CD4-positive, alpha-beta memory T cell (primary cell): ENCODE measurements at regions of chrX and their contacts with region 1.

Region 1: GRCh38 chrX:39874202-39874816 is 223.4 kb downstream of the BCOR start:
- DNase-seq: peak in 1 of 5 donors; percentile 47
- H3K4me3 ChIP-seq: no peak overlapping the region
- H3K4me3 Mint-ChIP-seq: no peak overlapping the region
- H3K27ac ChIP-seq: no peak overlapping the region
- H3K27ac Mint-ChIP-seq: peak overlapping the region in 4 of 7 donors; percentile 0 to 52 (median 42)
- H3K4me1 ChIP-seq: peaks cover 22% of the 10 kb centered on the region
- H3K4me1 Mint-ChIP-seq: peaks cover 15 to 38% (median 24%) of the 10 kb centered on the region in 4 donors
- H3K27me3 ChIP-seq: no peaks in the 10 kb centered on the region
- H3K27me3 Mint-ChIP-seq: no peaks in the 10 kb centered on the region

Region 2: DNA sequence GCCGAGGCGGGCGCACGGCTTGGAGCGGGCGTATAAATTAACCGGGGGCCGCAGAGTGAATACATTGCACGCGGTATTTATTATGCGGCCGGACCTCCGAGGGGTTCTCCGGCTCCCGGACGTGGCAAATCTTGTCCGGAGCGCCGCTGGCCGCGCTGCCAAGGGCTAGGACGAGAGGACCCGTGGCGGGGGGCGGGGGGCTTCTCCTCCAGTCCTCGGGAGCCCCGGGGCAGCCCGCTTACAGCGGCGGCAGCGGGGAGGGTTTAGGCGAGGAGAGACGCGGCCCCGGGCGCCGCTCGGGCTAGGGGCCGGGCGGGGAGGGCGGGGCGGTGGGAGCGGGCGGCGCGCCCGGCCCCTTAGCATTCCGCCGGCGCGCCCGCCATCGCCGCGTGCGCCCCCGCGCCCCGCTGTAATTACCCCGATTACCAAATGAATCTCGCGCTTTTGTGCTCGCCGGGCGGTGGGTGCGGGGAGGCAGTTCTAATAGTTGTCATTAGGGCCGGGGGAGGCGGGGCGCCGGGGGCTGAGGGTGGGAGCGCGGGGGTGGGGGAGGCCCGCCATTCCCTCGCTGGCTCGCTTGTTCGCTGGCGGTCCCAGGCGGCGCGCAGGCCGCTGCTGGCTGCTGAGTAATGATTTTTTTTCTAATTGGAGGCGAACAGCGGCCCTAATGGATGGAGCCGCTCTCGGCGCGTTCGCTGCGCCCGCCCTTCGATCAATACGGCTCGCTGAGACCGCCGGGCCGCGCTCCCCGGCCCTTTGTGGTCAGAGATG is 53.2 kb before region 1 on chrX:
- CTCF ChIA-PET with region 1: no interaction called
- POLR2A ChIA-PET with region 1: no interaction called
- intact Hi-C with region 1: loop called (anchors 5 kb)
- DNase-seq: no peak
- H3K4me3 ChIP-seq: no peak overlapping the region
- H3K4me3 Mint-ChIP-seq: peak overlapping the region; percentile 49 to 74 (median 64)
- H3K27ac ChIP-seq: no peak overlapping the region
- H3K27ac Mint-ChIP-seq: no peak overlapping the region
- H3K4me1 ChIP-seq: peaks cover 8% of the 10 kb centered on the region
- H3K4me1 Mint-ChIP-seq: peaks cover 5 to 13% (median 7%) of the 10 kb centered on the region in 4 donors
- H3K27me3 ChIP-seq: no peaks in the 10 kb centered on the region
- H3K27me3 Mint-ChIP-seq: no peaks in the 10 kb centered on the region

Region 3: GRCh38 chrX:39907964-39908616 is 33.8 kb after region 1 on chrX:
- CTCF ChIA-PET with region 1: no interaction called
- POLR2A ChIA-PET with region 1: no interaction called
- intact Hi-C with region 1: no loop called
- DNase-seq: no peak
- H3K4me3 ChIP-seq: no peak overlapping the region
- H3K4me3 Mint-ChIP-seq: no peak overlapping the region
- H3K27ac ChIP-seq: no peak overlapping the region
- H3K27ac Mint-ChIP-seq: no peak overlapping the region
- H3K4me1 ChIP-seq: no peaks in the 10 kb centered on the region
- H3K4me1 Mint-ChIP-seq: peaks cover 0 to 2% (median under 1%) of the 10 kb centered on the region in 4 donors
- H3K27me3 ChIP-seq: no peaks in the 10 kb centered on the region
- H3K27me3 Mint-ChIP-seq: no peaks in the 10 kb centered on the region

Region 4: DNA sequence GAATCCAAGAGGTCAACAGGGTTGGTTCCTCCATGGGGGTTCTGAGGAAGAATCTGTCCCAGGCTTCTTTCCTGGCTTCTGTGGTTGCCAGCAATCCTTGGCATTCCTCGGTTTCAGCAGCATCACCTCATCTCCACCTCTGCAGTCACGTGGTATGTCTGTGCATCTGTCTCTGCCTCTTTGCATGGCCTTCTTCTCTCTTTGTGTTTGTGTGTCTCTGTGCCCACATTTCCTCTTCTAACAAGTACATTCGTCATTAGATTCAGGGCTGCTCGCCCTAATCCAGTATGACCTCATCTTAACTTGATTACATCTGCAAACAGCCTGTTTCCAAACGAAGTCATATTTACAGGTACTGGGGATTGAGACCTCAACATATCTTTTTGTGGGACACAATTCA is 109.4 kb after region 1 on chrX:
- CTCF ChIA-PET with region 1: no interaction called
- POLR2A ChIA-PET with region 1: no interaction called
- intact Hi-C with region 1: no loop called
- DNase-seq: no peak
- H3K4me3 ChIP-seq: no peak overlapping the region
- H3K4me3 Mint-ChIP-seq: no peak overlapping the region
- H3K27ac ChIP-seq: no peak overlapping the region
- H3K27ac Mint-ChIP-seq: no peak overlapping the region
- H3K4me1 ChIP-seq: no peaks in the 10 kb centered on the region
- H3K4me1 Mint-ChIP-seq: no peaks in the 10 kb centered on the region
- H3K27me3 ChIP-seq: no peaks in the 10 kb centered on the region
- H3K27me3 Mint-ChIP-seq: no peaks in the 10 kb centered on the region